IMR-90 (cell line): ENCODE measurements at regions of chr11 and their contacts with region 1.

Region 1: DNA sequence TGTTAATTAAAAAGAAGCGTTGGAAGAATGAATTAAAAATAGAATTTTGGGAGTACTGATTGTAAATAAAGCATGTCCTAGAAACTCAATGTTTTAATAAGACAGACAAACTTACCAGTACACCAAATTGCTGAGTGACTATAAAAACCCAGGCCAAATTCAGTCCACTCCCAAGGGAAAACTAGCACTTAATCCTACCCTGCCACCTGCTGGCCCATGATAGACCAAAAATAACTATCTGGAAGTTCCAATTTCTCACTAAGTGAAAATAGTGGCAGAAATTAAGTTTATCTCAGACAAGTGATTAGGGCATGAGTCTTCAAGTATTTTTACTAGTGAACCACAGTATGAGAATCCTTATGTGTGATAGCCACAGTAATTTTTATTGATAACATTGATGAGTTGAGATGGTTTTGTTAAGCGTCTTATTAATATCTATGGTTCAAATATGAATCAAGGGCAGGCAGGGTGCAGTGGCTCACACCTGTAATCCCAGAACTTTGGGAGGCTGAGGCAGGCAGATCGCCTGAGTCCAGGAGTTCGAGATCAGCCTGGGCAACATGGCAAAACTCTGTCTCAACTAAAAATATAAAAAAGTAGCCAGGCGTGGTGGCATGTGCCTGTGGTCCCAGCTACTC is 9.8 kb upstream of the DDX10 start:
- DNase-seq: peak; percentile 56
- ATAC-seq: peak; percentile 37; the same call in 1 of the 2 replicates
- H3K4me3 ChIP-seq: no peak overlapping the region
- H3K27ac ChIP-seq: no peak overlapping the region
- H3K4me1 ChIP-seq: no peaks in the 10 kb centered on the region
- H3K27me3 ChIP-seq: no peaks in the 10 kb centered on the region
- CTCF ChIP-seq: peak; percentile 76
- POLR2A ChIP-seq: no peak
- RAD21 ChIP-seq: peak; percentile 83

Region 2: DNA sequence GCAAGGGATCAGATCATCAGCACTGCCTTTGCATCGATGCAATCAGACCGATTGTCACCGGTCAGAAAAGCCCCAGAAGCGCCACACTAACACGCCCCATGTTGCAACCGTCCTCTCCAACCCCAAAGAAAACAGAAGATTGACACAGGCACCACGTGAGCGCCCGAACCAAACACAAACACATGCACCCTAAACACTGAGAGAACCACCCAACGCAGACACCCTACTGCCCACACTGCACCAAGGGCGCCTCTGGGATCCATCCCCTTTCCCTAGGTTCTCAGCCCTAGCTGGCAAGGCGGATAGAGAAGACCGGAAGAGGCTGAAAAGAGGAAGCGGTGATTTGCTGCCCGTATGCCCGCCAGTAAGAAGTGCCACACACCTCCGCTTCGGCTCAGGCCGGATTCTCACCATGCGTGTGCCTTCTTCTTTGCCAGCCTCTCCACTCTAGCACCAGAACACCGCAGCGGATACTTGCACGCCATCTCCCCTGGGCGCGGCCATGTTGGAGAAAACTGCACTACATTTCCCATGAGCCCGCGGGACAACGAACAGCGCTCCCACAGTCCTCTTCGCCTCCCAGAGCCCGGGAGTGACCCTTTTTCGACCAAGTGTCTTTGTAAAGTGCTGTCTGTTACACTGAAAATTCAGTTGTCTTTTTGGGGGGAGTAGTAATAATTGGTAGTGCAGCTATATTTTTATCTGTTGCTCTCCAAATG is 1089.7 kb before region 1 on chr11 and contains the start of gene ALKBH8:
- CTCF ChIA-PET with region 1: no interaction called
- POLR2A ChIA-PET with region 1: no interaction called
- dilution Hi-C with region 1: no loop called
- in situ Hi-C with region 1: no loop called
- intact Hi-C with region 1: loop called (anchors 10 kb)
- DNase-seq: peak; percentile 58
- ATAC-seq: peak; percentile 92
- H3K4me3 ChIP-seq: peak within 1 kb of the TSS; percentile 85
- H3K27ac ChIP-seq: peak within 1 kb of the TSS; percentile 84
- H3K4me1 ChIP-seq: peaks cover 7% of the 10 kb centered on the region
- H3K27me3 ChIP-seq: no peaks in the 10 kb centered on the region
- CTCF ChIP-seq: no peak
- POLR2A ChIP-seq: no peak
- RAD21 ChIP-seq: no peak
- total RNA-seq, gene ALKBH8: 6.6 and 12.5 TPM in 2 replicates

Region 3: DNA sequence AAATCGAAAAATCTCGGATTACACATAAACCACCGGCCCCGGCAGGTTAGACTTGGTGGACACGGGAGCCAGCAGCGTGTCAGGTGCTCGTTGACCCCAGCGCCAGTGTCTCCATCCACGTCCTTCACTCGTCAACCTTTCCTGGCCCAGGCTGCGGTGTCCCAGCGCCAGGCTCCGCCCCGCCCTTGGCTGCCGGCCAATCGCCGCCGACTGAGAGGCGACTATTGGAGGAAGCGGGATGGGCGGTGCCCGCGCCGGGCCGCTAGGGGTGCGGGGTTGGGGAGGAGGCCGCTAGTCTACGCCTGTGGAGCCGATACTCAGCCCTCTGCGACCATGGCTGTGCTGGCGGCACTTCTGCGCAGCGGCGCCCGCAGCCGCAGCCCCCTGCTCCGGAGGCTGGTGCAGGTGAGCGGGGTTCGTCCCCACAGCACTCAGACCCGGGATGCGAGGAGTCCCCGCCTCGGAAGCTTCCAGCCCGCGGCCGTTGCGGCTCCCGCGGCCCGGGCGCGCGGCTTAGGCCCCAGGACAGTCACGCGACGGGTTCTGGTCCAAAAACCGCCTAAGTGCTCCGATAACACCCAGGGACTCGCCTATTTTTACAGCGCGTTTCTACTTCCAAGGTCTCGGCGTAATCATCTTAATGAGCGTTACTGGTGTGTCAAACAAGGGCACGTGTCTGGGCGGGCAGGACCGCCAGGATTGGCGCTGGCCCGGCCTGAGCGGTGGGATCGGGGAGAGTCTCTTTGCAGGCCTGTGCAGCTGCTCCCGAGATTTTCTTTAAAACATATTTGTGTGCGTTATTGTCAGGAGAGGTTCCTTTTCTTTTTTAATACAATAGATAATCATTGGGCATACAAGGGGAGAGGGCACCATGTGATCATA is 533.6 kb before region 1 on chr11 and contains the start of gene ACAT1:
- CTCF ChIA-PET with region 1: interaction called, 3 read pairs
- POLR2A ChIA-PET with region 1: no interaction called
- dilution Hi-C with region 1: no loop called
- in situ Hi-C with region 1: loop called (anchors 5 kb)
- intact Hi-C with region 1: loop called (anchors 1 kb)
- DNase-seq: peak; percentile 82
- ATAC-seq: peak; percentile 98
- H3K4me3 ChIP-seq: peak within 1 kb of the TSS; percentile 86
- H3K27ac ChIP-seq: peak within 1 kb of the TSS; percentile 70
- H3K4me1 ChIP-seq: peaks cover 3% of the 10 kb centered on the region
- H3K27me3 ChIP-seq: no peaks in the 10 kb centered on the region
- CTCF ChIP-seq: peak; percentile 18; the same call in 1 of the 2 replicates
- POLR2A ChIP-seq: peak; percentile 83
- RAD21 ChIP-seq: no peak
- total RNA-seq, gene ACAT1: 57.7 and 87.2 TPM in 2 replicates